Testis (tissue), 5 donors: ENCODE measurements at regions of chr2 and their contacts with region 1.

Region 1: DNA sequence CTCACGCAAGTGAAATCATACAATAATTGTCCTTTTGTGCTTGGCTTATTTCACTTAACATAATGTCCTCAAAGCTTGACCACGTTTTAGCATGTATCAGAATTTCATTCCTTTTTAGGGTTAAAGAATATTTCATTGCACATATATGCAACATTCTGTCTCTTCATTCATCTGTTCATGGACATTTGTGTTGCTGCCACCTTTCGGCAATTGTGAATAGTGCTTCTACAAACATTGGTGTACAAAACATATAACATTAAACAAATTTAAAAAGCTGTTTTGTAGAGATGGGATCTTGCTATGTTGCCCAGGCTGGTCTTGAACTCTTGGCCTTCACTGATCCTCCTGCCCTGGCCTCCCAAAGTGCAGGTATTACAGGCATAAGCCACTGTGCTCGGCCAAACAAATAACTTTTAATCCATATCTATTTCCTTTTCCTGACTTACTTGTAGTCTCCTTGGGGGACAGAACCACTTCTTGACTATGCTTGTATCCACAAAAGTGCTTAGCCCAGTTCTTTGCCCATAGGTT is 209.3 kb downstream of the SLC4A3 start:
- DNase-seq: peak; percentile 28
- H3K4me3 ChIP-seq: no peak overlapping the region
- H3K27ac ChIP-seq: no peak overlapping the region
- H3K4me1 ChIP-seq: no peaks in the 10 kb centered on the region
- H3K27me3 ChIP-seq: no peaks in the 10 kb centered on the region
- CTCF ChIP-seq: peak in 2 of 3 experiments; percentile 9 to 12
- POLR2A ChIP-seq: no peak

Region 2: GRCh38 chr2:219352448-219353023 is 484.2 kb before region 1 on chr2:
- intact Hi-C with region 1: no loop called
- DNase-seq: peak; percentile 80
- H3K4me3 ChIP-seq: no peak overlapping the region
- H3K27ac ChIP-seq: no peak overlapping the region
- H3K4me1 ChIP-seq: no peaks in the 10 kb centered on the region
- H3K27me3 ChIP-seq: no peaks in the 10 kb centered on the region
- CTCF ChIP-seq: peak; percentile 45 to 65 (median 65)
- POLR2A ChIP-seq: no peak

Region 3: DNA sequence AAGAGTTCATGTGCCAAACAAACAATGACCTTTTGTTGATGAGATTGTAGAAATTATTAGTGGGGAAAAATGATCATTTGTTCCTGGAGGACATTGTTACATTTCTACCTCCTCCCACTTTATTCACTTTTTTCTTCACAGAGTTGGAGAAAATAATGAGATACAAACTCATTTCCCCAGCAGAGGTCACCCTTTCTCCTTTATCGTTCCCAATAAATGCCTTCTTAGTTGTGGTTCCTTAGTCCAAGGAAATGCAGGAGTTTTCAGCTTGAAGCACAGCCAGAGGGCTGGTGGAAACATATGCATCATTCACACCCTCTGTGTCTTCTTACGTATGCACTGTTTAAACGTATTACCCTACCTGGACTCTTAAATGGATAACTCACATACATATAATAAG is 100.5 kb before region 1 on chr2:
- intact Hi-C with region 1: loop called (anchors 10 kb)
- DNase-seq: peak; percentile 46
- H3K4me3 ChIP-seq: no peak overlapping the region
- H3K27ac ChIP-seq: no peak overlapping the region
- H3K4me1 ChIP-seq: no peaks in the 10 kb centered on the region
- H3K27me3 ChIP-seq: no peaks in the 10 kb centered on the region
- CTCF ChIP-seq: peak; percentile 50 to 57 (median 56)
- POLR2A ChIP-seq: no peak

Region 4: GRCh38 chr2:219769090-219769910 is 67.4 kb before region 1 on chr2:
- intact Hi-C with region 1: no loop called
- DNase-seq: peak; percentile 48
- H3K4me3 ChIP-seq: no peak overlapping the region
- H3K27ac ChIP-seq: no peak overlapping the region
- H3K4me1 ChIP-seq: no peaks in the 10 kb centered on the region
- H3K27me3 ChIP-seq: no peaks in the 10 kb centered on the region
- CTCF ChIP-seq: no peak
- POLR2A ChIP-seq: no peak